Breast epithelium (tissue), 4 donors: ENCODE measurements at regions of chr7 and their contacts with region 1.

Region 1: DNA sequence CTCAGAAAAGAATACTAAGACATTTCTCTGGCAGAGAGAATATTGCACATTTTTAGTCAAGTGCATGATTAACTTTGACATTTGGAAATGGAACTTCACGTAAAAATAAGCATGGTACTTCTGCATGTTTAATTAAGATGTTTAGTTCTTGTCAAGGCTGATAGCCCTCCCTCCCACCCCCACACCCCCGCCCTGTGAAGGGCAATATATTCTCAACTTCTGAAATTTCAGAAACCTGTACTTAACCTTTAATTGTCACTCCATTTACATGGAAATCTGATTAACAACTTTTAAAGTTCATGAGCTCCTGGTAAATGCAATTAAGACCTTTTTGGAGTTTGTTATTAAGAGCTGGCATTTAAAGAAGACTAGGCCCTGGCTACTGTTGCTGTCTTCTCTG is 205.8 kb downstream of the EXOC4 start:
- DNase-seq: no peak
- H3K4me3 ChIP-seq: no peak overlapping the region
- H3K27ac ChIP-seq: no peak overlapping the region
- H3K4me1 ChIP-seq: no peaks in the 10 kb centered on the region
- H3K27me3 ChIP-seq: no peaks in the 10 kb centered on the region
- CTCF ChIP-seq: no peak
- POLR2A ChIP-seq: no peak

Region 2: GRCh38 chr7:133081599-133082389 is 376.9 kb before region 1 on chr7 and contains the start of gene CHCHD3:
- intact Hi-C with region 1: no loop called
- DNase-seq: peak; percentile 96 to 98
- H3K4me3 ChIP-seq: peak within 1 kb of the TSS; percentile 78 to 87 (median 79)
- H3K27ac ChIP-seq: peak within 1 kb of the TSS; percentile 82 to 85
- H3K4me1 ChIP-seq: no peaks in the 10 kb centered on the region
- H3K27me3 ChIP-seq: no peaks in the 10 kb centered on the region
- CTCF ChIP-seq: no peak
- POLR2A ChIP-seq: no peak
- total RNA-seq, gene CHCHD3: 52.1 to 59.4 (median 53.1) TPM

Region 3: GRCh38 chr7:133412942-133413341 is 45.7 kb before region 1 on chr7:
- intact Hi-C with region 1: no loop called
- DNase-seq: no peak
- H3K4me3 ChIP-seq: no peak overlapping the region
- H3K27ac ChIP-seq: no peak overlapping the region
- H3K4me1 ChIP-seq: no peaks in the 10 kb centered on the region
- H3K27me3 ChIP-seq: no peaks in the 10 kb centered on the region
- CTCF ChIP-seq: no peak
- POLR2A ChIP-seq: no peak

Region 4: GRCh38 chr7:134403677-134404076 is 945.0 kb after region 1 on chr7:
- intact Hi-C with region 1: loop called (anchors 5 kb)
- DNase-seq: no peak
- H3K4me3 ChIP-seq: no peak overlapping the region
- H3K27ac ChIP-seq: no peak overlapping the region
- H3K4me1 ChIP-seq: no peaks in the 10 kb centered on the region
- H3K27me3 ChIP-seq: no peaks in the 10 kb centered on the region
- CTCF ChIP-seq: no peak
- POLR2A ChIP-seq: no peak